ENCODE measurements at regions of chr11 and their contacts with region 1.

Region 1: GRCh38 chr11:75380711-75381420 is 18.5 kb upstream of the RPS3 start:
- DNase-seq: no peak
- H3K4me3 ChIP-seq: no peak overlapping the region
- H3K27ac ChIP-seq: no peak overlapping the region
- H3K4me1 ChIP-seq: no peaks in the 10 kb centered on the region
- H3K27me3 ChIP-seq: no peaks in the 10 kb centered on the region
- CTCF ChIP-seq: no peak

Region 2: GRCh38 chr11:75142714-75143419 is 238.0 kb before region 1 on chr11:
- CTCF ChIA-PET with region 1: no interaction called
- POLR2A ChIA-PET with region 1: no interaction called
- intact Hi-C with region 1: no loop called
- DNase-seq: peak; percentile 98
- H3K4me3 ChIP-seq: no peak overlapping the region
- H3K27ac ChIP-seq: peak overlapping the region; percentile 29
- H3K4me1 ChIP-seq: peaks cover 12% of the 10 kb centered on the region
- H3K27me3 ChIP-seq: no peaks in the 10 kb centered on the region
- CTCF ChIP-seq: no peak

Region 3: GRCh38 chr11:75365711-75366181 is 15.1 kb before region 1 on chr11:
- CTCF ChIA-PET with region 1: no interaction called
- POLR2A ChIA-PET with region 1: no interaction called
- intact Hi-C with region 1: loop called (anchors 2 kb)
- DNase-seq: no peak
- H3K4me3 ChIP-seq: no peak overlapping the region
- H3K27ac ChIP-seq: no peak overlapping the region
- H3K4me1 ChIP-seq: no peaks in the 10 kb centered on the region
- H3K27me3 ChIP-seq: no peaks in the 10 kb centered on the region
- CTCF ChIP-seq: no peak